ENCODE measurements at regions of chr1 and their contacts with region 1.

Region 1: GRCh38 chr1:244012202-244012601 is 38.9 kb upstream of the ZBTB18 start:
- DNase-seq: no peak
- H3K4me3 ChIP-seq: peak overlapping the region in 1 of 4 experiments; percentile 0; a peak in 1 of 8 replicates
- H3K27ac ChIP-seq: no peak overlapping the region
- H3K4me1 ChIP-seq: peaks cover 0 to 7% (median 5%) of the 10 kb centered on the region in 4 experiments; a peak in 4 of 7 replicates
- H3K27me3 ChIP-seq: no peaks in the 10 kb centered on the region
- CTCF ChIP-seq: no peak
- EP300 ChIP-seq: no peak
- POLR2A ChIP-seq: no peak
- RAD21 ChIP-seq: no peak

Region 2: GRCh38 chr1:244272471-244273261 is 260.5 kb after region 1 on chr1:
- CTCF ChIA-PET with region 1: interaction called, 10 read pairs
- POLR2A ChIA-PET with region 1: no interaction called
- DNase-seq: peak; percentile 59 to 83
- H3K4me3 ChIP-seq: no peak overlapping the region
- H3K27ac ChIP-seq: no peak overlapping the region
- H3K4me1 ChIP-seq: no peaks in the 10 kb centered on the region
- H3K27me3 ChIP-seq: no peaks in the 10 kb centered on the region
- CTCF ChIP-seq: peak; percentile 72 to 99 (median 98)
- EP300 ChIP-seq: no peak
- POLR2A ChIP-seq: no peak
- RAD21 ChIP-seq: peak; percentile 97 to 100